Activated CD4-positive, alpha-beta memory T cell treated with anti-CD3 and anti-CD28 coated beads for 36 hours (primary cell): ENCODE measurements at regions of chr7 and their contacts with region 1.

Region 1: GRCh38 chr7:3042861-3043489 is 692 bp downstream of the CARD11 start:
- DNase-seq: peak; percentile 89
- H3K4me3 Mint-ChIP-seq: peak overlapping the region; percentile 98
- H3K27ac Mint-ChIP-seq: peak overlapping the region; percentile 99
- H3K4me1 Mint-ChIP-seq: peaks cover 46% of the 10 kb centered on the region
- H3K27me3 Mint-ChIP-seq: no peaks in the 10 kb centered on the region

Region 2: GRCh38 chr7:2870471-2870931 is 172.5 kb before region 1 on chr7:
- CTCF ChIA-PET with region 1: interaction called, 3 read pairs
- POLR2A ChIA-PET with region 1: no interaction called
- intact Hi-C with region 1: loop called (anchors 5 kb)
- DNase-seq: peak; percentile 87
- H3K4me3 Mint-ChIP-seq: peak overlapping the region; percentile 30
- H3K27ac Mint-ChIP-seq: peak overlapping the region; percentile 55
- H3K4me1 Mint-ChIP-seq: peaks cover 39% of the 10 kb centered on the region
- H3K27me3 Mint-ChIP-seq: no peaks in the 10 kb centered on the region

Region 3: DNA sequence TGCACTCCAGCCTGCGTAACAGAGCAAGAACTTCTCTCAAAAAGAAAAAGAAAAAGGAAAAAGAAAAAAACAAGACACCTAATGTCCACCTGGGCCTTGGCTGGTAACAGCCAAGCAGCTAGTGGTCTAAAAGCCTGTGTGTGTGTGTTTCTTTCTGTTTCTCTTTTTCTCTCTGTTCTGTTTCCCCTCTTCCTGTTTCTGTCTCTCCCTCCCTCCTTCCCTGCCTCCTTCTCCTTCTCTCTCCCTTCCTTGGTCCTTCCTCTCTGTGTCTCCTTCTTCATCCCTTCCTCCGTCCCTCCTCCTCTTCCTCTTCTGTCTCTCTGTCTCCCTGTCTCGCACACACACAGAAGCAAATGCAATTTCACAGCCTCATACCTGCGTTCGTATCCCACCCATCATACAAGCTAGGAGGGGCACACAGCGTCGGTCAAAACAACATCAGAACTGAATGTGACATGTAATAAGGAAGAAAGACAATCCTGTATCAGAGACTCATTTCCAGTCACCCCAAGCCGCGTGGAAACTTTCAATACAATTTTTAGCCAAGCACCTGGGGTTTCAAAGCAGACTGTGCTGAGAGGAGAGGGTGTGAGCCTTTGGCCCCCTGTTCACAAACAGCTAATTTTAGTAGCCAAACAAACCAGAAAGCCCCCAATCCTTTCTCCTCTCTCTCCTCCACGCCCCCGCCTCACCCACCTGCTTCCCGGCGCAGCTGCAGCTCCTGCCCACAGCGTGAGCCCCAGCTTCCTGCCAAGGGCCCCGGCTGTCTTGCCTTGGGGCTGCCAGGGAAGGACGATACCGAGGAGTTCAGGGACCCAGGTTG is 148.6 kb before region 1 on chr7:
- CTCF ChIA-PET with region 1: interaction called, 3 read pairs
- POLR2A ChIA-PET with region 1: no interaction called
- intact Hi-C with region 1: loop called (anchors 5 kb)
- DNase-seq: peak; percentile 84
- H3K4me3 Mint-ChIP-seq: peak overlapping the region; percentile 73
- H3K27ac Mint-ChIP-seq: peak overlapping the region; percentile 94
- H3K4me1 Mint-ChIP-seq: peaks cover 23% of the 10 kb centered on the region
- H3K27me3 Mint-ChIP-seq: no peaks in the 10 kb centered on the region

Region 4: DNA sequence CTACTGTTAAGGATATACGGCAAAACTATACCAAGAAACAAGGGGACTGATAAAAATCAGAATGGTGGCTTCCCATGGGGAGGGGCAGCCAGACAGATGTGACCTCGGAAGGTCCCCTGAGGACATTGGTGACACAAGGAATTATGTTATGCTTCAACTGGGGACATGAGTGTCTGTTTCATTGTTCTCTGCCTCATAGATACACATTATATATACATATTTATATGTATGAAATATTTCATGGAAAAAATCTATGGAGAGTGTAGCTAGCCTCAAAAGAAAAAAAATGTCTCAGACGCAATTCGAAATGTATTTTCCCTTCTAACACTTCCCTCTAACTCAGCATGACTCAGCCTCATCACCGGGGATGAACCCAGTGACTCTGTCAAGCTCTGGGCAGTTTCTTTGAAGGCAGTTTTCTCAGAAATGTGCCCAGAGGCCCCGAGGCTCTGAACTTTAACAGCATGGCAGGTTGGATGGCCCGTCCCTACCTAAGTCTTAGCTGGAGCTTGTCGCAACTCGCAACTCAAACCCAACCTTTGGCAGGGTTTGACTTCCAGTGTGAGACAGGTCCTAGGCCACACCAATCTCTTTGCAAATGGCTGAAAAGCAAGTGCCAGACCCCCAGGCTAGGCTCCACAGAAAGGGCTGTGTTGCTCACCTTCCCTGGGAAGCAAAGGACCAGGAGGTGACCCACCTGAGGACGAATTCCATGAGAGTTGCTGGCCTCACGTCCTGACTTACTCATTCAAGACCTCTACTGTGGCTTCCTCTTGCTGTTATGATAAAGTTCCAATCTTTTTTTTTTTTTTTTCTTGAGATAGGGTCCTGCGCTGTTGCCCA is 86.2 kb before region 1 on chr7:
- CTCF ChIA-PET with region 1: interaction called, 4 read pairs
- POLR2A ChIA-PET with region 1: interaction called, 3 read pairs
- intact Hi-C with region 1: loop called (anchors 1 kb)
- DNase-seq: peak; percentile 79
- H3K4me3 Mint-ChIP-seq: no peak overlapping the region
- H3K27ac Mint-ChIP-seq: peak overlapping the region; percentile 91
- H3K4me1 Mint-ChIP-seq: peaks cover 65% of the 10 kb centered on the region
- H3K27me3 Mint-ChIP-seq: no peaks in the 10 kb centered on the region

Region 5: GRCh38 chr7:2978403-2978802 is 64.6 kb before region 1 on chr7:
- CTCF ChIA-PET with region 1: no interaction called
- POLR2A ChIA-PET with region 1: no interaction called
- intact Hi-C with region 1: loop called (anchors 2 kb)
- DNase-seq: peak; percentile 97
- H3K4me3 Mint-ChIP-seq: peak overlapping the region; percentile 63
- H3K27ac Mint-ChIP-seq: peak overlapping the region; percentile 91
- H3K4me1 Mint-ChIP-seq: peaks cover 69% of the 10 kb centered on the region
- H3K27me3 Mint-ChIP-seq: no peaks in the 10 kb centered on the region

Region 6: DNA sequence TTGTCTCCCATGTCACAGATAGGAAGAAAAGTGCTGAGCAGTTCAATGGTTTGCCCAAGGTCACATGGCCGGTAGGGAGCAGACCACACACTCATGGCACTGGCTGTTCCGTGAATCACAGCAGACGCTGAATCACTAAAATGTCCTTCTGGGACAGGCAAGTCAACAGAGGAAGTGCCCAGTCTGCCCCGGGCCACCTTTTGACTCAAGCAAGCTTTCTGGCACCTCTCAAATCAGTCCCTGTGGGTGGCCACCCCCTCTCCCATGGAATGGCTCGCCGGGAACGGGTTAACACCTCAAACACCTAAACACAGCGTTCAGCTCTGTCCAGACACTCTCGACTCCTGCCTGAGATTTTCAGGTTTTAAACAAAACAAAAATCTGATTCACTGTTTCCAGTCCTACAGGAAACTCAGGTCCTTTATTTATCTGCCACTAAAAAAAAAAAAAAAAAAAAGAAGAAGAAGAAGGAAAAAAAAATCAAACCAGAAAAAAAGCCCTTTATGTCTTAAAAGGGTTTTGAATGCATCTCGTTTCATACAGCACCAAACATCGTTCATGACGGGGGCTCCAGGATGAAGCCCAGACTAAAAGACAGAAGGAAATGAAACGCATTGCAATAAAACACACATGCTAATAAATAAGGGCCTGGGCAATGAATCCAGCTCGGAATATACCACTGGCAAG is 14.8 kb before region 1 on chr7:
- CTCF ChIA-PET with region 1: no interaction called
- POLR2A ChIA-PET with region 1: interaction called, 3 read pairs
- intact Hi-C with region 1: loop called (anchors 1 kb)
- DNase-seq: peak; percentile 89
- H3K4me3 Mint-ChIP-seq: peak overlapping the region; percentile 61
- H3K27ac Mint-ChIP-seq: peak overlapping the region; percentile 96
- H3K4me1 Mint-ChIP-seq: peaks cover 51% of the 10 kb centered on the region
- H3K27me3 Mint-ChIP-seq: no peaks in the 10 kb centered on the region

Region 7: DNA sequence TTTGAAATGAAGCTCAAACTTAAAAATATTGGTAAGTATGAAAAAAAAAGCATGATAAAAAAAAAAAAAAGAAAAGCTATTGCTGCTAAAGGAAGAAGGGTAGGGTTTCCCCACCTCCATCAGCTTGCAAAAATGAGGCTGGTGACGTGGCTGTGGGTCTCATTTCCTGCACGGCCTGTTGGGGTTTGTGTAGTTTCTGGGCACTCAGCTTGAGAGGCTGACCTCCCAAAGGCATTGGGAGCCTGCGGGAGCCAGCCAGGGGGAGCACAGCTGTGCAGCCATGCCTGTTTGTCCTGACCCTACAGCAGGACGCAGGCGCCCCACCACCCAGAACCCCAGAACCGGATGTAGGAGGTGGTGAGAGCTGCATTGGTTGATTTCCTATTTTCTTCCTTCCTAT is 49.5 kb after region 1 on chr7:
- CTCF ChIA-PET with region 1: interaction called, 4 read pairs
- POLR2A ChIA-PET with region 1: no interaction called
- intact Hi-C with region 1: loop called (anchors 2 kb)
- DNase-seq: peak; percentile 91
- H3K4me3 Mint-ChIP-seq: peak overlapping the region; percentile 27
- H3K27ac Mint-ChIP-seq: peak overlapping the region; percentile 89
- H3K4me1 Mint-ChIP-seq: peaks cover 70% of the 10 kb centered on the region
- H3K27me3 Mint-ChIP-seq: no peaks in the 10 kb centered on the region

Region 8: GRCh38 chr7:3200504-3200903 is 157.5 kb after region 1 on chr7:
- CTCF ChIA-PET with region 1: no interaction called
- POLR2A ChIA-PET with region 1: no interaction called
- intact Hi-C with region 1: no loop called
- DNase-seq: peak; percentile 39
- H3K4me3 Mint-ChIP-seq: no peak overlapping the region
- H3K27ac Mint-ChIP-seq: no peak overlapping the region
- H3K4me1 Mint-ChIP-seq: no peaks in the 10 kb centered on the region
- H3K27me3 Mint-ChIP-seq: peaks cover 5% of the 10 kb centered on the region